ENCODE measurements at regions of chr2 and their contacts with region 1.

Region 1: DNA sequence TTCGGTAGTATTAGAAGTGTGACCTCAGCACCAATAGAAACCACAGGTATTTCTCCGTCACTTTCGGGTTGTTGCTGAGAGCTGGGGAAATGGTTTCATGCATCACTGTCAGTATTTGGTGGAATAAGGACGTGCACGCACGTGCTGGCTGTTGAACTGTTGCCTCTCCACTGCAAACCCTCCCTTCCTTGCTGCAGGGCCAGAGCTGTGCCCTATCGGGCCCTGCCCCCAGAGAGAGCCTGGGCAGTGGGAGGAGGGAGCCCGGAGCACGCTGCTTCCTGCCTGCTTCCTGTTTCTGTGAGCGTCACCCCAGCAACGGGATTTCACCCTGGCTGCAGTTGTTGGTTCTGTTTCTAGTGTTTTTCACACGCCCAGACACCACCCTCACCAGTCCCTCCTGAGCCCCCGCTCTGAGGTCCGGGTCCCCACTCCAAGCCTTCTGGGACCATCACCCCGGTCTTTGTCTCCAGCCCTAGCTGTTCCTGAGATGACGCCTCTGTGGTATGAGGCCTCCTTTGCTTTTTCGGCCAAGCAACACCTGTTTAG is 47.4 kb downstream of the LRRFIP1 start:
- DNase-seq: peak; percentile 83
- CTCF ChIP-seq: no peak

Region 2: GRCh38 chr2:237581751-237582746 is 92.8 kb before region 1 on chr2:
- CTCF ChIA-PET with region 1: no interaction called
- POLR2A ChIA-PET with region 1: no interaction called
- DNase-seq: peak; percentile 56
- CTCF ChIP-seq: peak; percentile 50

Region 3: GRCh38 chr2:237662671-237663093 is 12.1 kb before region 1 on chr2:
- CTCF ChIA-PET with region 1: interaction called, 21 read pairs
- POLR2A ChIA-PET with region 1: no interaction called
- DNase-seq: no peak
- CTCF ChIP-seq: no peak

Region 4: GRCh38 chr2:237685408-237685807 is 10.6 kb after region 1 on chr2:
- CTCF ChIA-PET with region 1: interaction called, 120 read pairs
- POLR2A ChIA-PET with region 1: interaction called, 4 read pairs
- DNase-seq: no peak
- CTCF ChIP-seq: no peak

Region 5: GRCh38 chr2:237691908-237692600 is 17.2 kb after region 1 on chr2:
- CTCF ChIA-PET with region 1: interaction called, 120 read pairs
- POLR2A ChIA-PET with region 1: interaction called, 4 read pairs
- DNase-seq: peak; percentile 96
- CTCF ChIP-seq: no peak

Region 6: DNA sequence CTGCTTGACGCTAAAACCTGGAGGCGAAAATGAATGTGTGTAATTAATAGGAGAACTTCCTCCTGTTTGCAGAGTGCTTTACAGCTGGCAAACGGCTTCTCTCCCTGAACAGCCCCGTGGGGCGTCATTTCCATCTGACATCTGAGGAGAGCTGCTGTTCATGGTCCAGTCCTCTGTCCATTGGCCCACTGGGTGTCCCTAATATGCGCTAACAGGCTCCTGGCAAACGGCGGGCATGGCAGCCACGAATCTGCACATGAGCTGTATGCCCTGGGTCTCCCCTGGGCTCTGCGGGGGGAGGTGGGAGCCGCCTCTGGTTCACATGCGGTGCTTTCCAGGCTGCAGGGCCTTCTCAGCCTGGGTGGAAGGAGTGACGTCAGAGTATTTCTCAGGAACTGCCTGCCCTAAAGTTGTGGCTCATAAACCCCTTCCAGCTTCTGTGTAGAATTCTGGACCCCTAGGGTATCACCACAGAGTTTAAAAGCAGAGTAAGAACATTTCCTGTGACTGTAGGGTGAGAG is 25.8 kb after region 1 on chr2:
- CTCF ChIA-PET with region 1: interaction called, 17 read pairs
- POLR2A ChIA-PET with region 1: no interaction called
- DNase-seq: peak; percentile 61
- CTCF ChIP-seq: no peak

Region 7: GRCh38 chr2:237752761-237753165 is 78.0 kb after region 1 on chr2:
- CTCF ChIA-PET with region 1: interaction called, 212 read pairs
- POLR2A ChIA-PET with region 1: no interaction called
- DNase-seq: peak; percentile 85
- CTCF ChIP-seq: no peak

Region 8: DNA sequence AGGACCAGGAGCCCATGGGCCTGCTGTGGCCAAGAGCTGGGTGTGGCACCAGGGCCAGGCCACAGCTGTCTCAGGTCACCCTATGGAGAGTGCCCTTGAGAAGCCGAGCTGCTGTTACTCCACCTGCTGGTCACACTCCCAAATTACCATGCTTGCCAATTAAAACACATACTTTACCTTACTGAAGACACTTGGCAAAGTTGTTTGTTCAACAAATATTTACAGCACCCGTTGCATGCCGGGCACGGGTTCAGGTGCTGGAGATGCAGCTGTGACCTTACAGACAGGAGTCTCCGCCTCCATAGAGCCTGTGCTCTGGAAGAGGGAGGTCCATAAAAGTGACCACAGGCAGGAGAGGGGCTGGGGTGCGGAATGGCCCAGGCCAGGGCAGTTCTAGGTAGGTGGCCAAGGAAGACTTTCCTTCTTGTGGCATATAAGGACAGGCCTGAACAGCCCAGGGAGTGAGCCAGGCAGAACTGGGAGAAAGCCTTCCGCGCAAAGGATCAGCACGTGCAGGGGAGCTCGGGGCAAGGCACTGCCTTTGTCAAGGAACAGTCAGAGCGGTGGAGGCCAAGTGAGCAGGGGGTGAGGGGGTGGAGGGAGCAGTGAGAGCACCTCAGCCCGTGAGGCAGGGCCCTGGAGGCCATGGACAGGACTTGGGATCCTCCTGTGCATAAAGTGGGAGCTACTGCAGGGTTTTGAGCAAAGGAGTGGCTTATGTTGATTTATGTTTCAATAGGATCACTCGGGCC is 100.2 kb after region 1 on chr2:
- CTCF ChIA-PET with region 1: interaction called, 33 read pairs
- POLR2A ChIA-PET with region 1: no interaction called
- DNase-seq: peak; percentile 69
- CTCF ChIP-seq: peak; percentile 49

Region 9: DNA sequence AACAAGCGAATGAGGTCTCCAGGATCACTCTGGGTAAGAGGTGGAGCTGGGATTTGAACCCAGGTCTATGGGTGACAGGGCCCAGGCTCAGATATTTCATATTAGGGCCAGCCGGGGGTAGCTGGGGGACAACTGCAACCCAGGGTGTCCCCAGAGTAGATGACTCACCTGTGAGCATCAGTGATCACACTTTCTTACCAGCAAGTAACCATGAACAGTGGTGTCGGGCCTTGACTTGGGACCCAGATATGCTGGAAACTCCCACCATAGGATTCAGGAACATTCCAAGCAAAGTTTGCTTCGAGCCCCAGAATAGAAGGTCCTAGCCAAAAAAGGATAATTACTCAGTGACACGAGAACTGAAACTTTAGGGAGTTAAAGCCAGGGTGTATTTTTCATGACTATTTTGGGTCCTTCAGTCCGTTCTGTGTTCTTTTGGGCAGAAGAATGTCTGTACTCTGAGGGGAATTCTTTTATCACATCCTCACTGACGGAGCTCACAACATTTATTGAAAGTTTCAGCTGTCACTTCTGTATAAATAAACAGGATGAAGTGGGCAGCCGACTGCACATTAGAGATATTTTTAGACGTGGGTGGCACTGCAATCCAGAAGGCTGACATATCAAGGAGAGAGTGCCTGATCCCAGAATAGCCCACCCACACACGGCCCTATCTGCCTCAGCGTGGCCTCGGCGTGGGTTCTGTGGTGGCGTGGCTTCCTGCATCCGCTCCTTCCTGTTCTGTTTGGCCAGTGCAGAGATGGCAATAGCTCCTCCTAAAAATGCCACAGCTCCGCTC is 230.2 kb after region 1 on chr2:
- CTCF ChIA-PET with region 1: no interaction called
- POLR2A ChIA-PET with region 1: no interaction called
- DNase-seq: no peak
- CTCF ChIP-seq: no peak

Measured in GM10248 (cell line).